Activated CD4-positive, alpha-beta memory T cell treated with anti-CD3 and anti-CD28 coated beads for 36 hours (primary cell): ENCODE measurements at regions of chr10 and their contacts with region 1.

Region 1: GRCh38 chr10:23314835-23315239 is 29.8 kb downstream of the C10orf67 start:
- DNase-seq: no peak
- H3K4me3 Mint-ChIP-seq: no peak overlapping the region
- H3K27ac Mint-ChIP-seq: no peak overlapping the region
- H3K4me1 Mint-ChIP-seq: no peaks in the 10 kb centered on the region
- H3K27me3 Mint-ChIP-seq: no peaks in the 10 kb centered on the region

Region 2: GRCh38 chr10:23238015-23238414 is 76.8 kb before region 1 on chr10:
- CTCF ChIA-PET with region 1: no interaction called
- POLR2A ChIA-PET with region 1: no interaction called
- intact Hi-C with region 1: no loop called
- DNase-seq: no peak
- H3K4me3 Mint-ChIP-seq: no peak overlapping the region
- H3K27ac Mint-ChIP-seq: no peak overlapping the region
- H3K4me1 Mint-ChIP-seq: no peaks in the 10 kb centered on the region
- H3K27me3 Mint-ChIP-seq: peaks cover 3% of the 10 kb centered on the region

Region 3: GRCh38 chr10:23516530-23516929 is 201.7 kb after region 1 on chr10:
- CTCF ChIA-PET with region 1: interaction called, 12 read pairs
- POLR2A ChIA-PET with region 1: no interaction called
- intact Hi-C with region 1: no loop called
- DNase-seq: no peak
- H3K4me3 Mint-ChIP-seq: no peak overlapping the region
- H3K27ac Mint-ChIP-seq: no peak overlapping the region
- H3K4me1 Mint-ChIP-seq: peaks cover 14% of the 10 kb centered on the region
- H3K27me3 Mint-ChIP-seq: peaks cover 32% of the 10 kb centered on the region

Region 4: GRCh38 chr10:23540401-23541030 is 225.7 kb after region 1 on chr10:
- CTCF ChIA-PET with region 1: interaction called, 15 read pairs
- POLR2A ChIA-PET with region 1: no interaction called
- intact Hi-C with region 1: no loop called
- DNase-seq: no peak
- H3K4me3 Mint-ChIP-seq: no peak overlapping the region
- H3K27ac Mint-ChIP-seq: no peak overlapping the region
- H3K4me1 Mint-ChIP-seq: peaks cover 18% of the 10 kb centered on the region
- H3K27me3 Mint-ChIP-seq: peaks cover 6% of the 10 kb centered on the region

Region 5: GRCh38 chr10:23702977-23703414 is 388.2 kb after region 1 on chr10:
- CTCF ChIA-PET with region 1: interaction called, 29 read pairs
- POLR2A ChIA-PET with region 1: no interaction called
- intact Hi-C with region 1: loop called (anchors 1 kb)
- DNase-seq: peak; percentile 54
- H3K4me3 Mint-ChIP-seq: no peak overlapping the region
- H3K27ac Mint-ChIP-seq: no peak overlapping the region
- H3K4me1 Mint-ChIP-seq: no peaks in the 10 kb centered on the region
- H3K27me3 Mint-ChIP-seq: peaks cover 27% of the 10 kb centered on the region